ENCODE measurements at regions of chr10 and their contacts with region 1.

Region 1: GRCh38 chr10:73879296-73880173 is 5.2 kb upstream of the CAMK2G start:
- DNase-seq: peak; percentile 96
- H3K4me3 Mint-ChIP-seq: no peak overlapping the region
- H3K27ac Mint-ChIP-seq: peak overlapping the region; percentile 6
- H3K4me1 Mint-ChIP-seq: peaks cover 37% of the 10 kb centered on the region
- H3K27me3 Mint-ChIP-seq: peaks cover 5% of the 10 kb centered on the region

Region 2: DNA sequence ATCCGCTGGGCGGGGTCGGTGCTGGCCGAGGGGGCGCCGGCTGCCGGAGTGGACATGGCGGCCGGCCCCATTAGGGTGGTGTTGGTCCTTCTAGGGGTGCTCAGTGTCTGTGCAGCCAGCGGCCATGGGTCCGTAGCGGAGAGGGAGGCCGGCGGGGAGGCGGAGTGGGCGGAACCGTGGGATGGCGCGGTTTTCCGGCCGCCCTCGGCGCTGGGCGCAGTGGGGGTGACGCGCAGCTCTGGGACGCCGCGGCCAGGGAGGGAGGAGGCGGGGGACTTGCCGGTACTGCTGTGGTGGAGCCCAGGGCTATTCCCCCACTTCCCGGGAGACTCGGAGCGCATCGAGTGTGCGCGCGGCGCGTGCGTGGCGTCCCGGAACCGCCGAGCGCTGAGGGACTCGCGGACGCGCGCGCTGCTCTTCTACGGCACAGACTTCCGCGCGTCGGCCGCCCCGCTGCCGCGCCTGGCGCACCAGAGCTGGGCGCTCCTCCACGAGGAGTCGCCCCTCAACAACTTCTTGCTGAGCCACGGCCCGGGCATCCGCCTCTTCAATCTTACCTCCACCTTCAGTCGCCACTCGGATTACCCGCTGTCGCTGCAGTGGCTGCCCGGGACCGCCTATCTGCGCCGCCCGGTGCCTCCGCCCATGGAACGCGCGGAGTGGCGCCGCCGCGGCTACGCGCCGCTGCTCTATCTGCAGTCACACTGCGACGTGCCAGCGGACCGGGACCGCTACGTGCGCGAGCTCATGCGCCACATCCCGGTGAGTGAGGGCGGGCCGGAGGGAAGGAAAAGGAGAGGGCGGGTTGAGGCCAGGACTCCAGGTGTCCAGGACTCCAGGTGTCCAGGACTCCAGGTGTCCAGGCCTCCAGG is 107.0 kb before region 1 on chr10:
- CTCF ChIA-PET with region 1: interaction called, 13 read pairs
- POLR2A ChIA-PET with region 1: interaction called, 4 read pairs
- DNase-seq: peak; percentile 86
- H3K4me3 Mint-ChIP-seq: peak overlapping the region; percentile 85
- H3K27ac Mint-ChIP-seq: peak overlapping the region; percentile 93
- H3K4me1 Mint-ChIP-seq: peaks cover 67% of the 10 kb centered on the region
- H3K27me3 Mint-ChIP-seq: no peaks in the 10 kb centered on the region

Region 3: DNA sequence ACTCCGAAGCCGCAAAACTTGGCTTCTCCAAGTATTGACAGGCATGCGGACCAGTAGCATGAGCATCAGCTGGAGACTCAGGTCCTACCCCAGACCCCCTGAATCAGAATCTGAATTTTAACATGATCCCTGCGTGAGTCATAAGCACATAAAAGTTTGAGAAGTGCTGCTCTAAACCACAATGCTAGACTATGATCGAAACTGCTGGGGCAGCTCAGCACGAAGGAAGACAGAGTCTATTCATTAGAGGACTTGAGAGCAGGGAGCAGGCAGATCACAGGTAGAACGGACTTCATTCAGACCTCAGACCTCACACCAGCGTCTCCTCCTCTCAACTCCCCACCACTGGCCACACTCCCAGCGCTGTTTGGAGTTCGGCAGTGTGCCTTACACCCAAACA is 22.1 kb before region 1 on chr10:
- CTCF ChIA-PET with region 1: interaction called, 350 read pairs
- POLR2A ChIA-PET with region 1: interaction called, 55 read pairs
- DNase-seq: peak; percentile 67
- H3K4me3 Mint-ChIP-seq: peak overlapping the region; percentile 52
- H3K27ac Mint-ChIP-seq: peak overlapping the region; percentile 79
- H3K4me1 Mint-ChIP-seq: peaks cover 73% of the 10 kb centered on the region
- H3K27me3 Mint-ChIP-seq: no peaks in the 10 kb centered on the region

Region 4: GRCh38 chr10:73908853-73909538 is 29.5 kb after region 1 on chr10:
- CTCF ChIA-PET with region 1: interaction called, 13 read pairs
- POLR2A ChIA-PET with region 1: no interaction called
- DNase-seq: peak; percentile 76
- H3K4me3 Mint-ChIP-seq: peak overlapping the region; percentile 65
- H3K27ac Mint-ChIP-seq: peak overlapping the region; percentile 82
- H3K4me1 Mint-ChIP-seq: peaks cover 45% of the 10 kb centered on the region
- H3K27me3 Mint-ChIP-seq: peaks cover 33% of the 10 kb centered on the region

Region 5: GRCh38 chr10:73956476-73957359 is 77.2 kb after region 1 on chr10:
- CTCF ChIA-PET with region 1: interaction called, 20 read pairs
- POLR2A ChIA-PET with region 1: interaction called, 3 read pairs
- DNase-seq: peak; percentile 59
- H3K4me3 Mint-ChIP-seq: peak overlapping the region; percentile 66
- H3K27ac Mint-ChIP-seq: peak overlapping the region; percentile 97
- H3K4me1 Mint-ChIP-seq: peaks cover 54% of the 10 kb centered on the region
- H3K27me3 Mint-ChIP-seq: no peaks in the 10 kb centered on the region

Region 6: DNA sequence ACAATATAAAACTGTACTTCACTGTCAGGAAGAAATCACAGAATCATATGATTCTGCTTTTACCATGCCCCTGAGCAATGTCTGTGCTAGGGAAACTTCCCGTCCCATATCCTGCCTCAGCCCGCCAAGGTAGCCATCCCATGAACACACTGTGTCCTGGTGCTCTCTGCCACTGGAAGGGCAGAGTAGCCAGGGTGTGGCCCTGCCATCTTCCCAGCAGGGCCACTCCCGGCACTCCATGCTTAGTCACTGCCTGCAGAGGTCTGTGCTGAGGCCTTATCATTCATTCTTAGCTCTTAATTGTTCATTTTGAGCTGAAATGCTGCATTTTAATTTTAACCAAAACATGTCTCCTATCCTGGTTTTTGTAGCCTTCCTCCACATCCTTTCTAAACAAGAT is 239.3 kb after region 1 on chr10:
- CTCF ChIA-PET with region 1: interaction called, 13 read pairs
- POLR2A ChIA-PET with region 1: interaction called, 3 read pairs
- DNase-seq: no peak
- H3K4me3 Mint-ChIP-seq: no peak overlapping the region
- H3K27ac Mint-ChIP-seq: peak overlapping the region; percentile 40
- H3K4me1 Mint-ChIP-seq: peaks cover 5% of the 10 kb centered on the region
- H3K27me3 Mint-ChIP-seq: no peaks in the 10 kb centered on the region